ENCODE measurements at regions of chr4 and their contacts with region 1.

Region 1: DNA sequence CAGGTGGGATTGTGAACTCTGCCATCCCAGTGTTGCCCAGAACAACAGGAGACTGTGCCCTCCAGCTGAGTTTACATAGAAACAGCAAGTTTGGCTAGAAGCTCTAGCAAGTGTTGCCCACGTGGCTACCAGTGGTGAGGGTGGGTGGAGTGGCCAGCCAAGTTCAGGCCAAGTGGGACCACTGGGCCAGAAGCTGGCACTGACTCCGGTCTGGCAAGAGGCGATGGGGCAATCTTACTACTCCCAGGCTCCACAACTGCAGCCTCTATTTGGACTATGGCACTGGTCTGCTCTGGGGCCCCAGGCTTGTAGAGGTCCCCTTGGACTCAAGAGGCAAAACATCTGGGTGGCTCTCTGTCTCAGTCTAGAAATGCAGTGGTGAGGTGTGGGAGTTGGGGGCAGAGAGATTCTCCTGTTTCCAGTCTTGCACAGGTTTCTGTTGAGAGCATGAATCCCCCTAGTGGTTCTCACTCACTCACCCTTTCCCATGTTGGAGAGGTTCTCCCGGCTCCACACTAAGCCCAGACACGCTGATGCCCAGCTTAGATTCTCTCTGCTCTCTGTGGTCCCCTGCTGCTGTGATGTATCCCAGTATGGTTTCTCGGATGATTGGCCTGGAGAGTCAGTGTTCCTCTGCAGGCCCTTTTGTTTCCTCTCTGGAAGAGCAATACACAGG is 615.3 kb downstream of the PDHA2 start:
- DNase-seq: no peak
- H3K4me3 ChIP-seq: no peak overlapping the region
- H3K27ac ChIP-seq: no peak overlapping the region
- H3K4me1 ChIP-seq: no peaks in the 10 kb centered on the region
- H3K27me3 ChIP-seq: no peaks in the 10 kb centered on the region
- CTCF ChIP-seq: no peak
- POLR2A ChIP-seq: no peak

Region 2: DNA sequence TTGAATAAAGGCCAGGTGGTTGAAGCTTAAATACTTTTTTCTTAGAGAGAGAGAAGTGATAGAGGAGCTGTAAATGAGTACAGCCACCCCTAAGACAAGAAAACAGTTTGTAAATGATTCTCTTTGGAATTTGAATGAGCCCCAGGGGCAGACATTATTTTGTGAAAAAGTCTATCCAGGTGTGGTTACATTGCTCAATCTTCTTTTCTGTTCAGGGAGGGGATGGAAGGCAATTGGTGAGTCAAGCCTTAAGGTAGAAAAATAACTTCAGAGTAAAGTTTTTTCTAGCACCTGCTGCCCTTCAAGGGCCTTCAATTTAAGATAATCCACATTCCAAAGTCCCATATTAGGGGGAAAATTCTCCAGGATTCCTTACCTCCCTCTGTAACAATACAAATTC is 31.4 kb after region 1 on chr4:
- intact Hi-C with region 1: loop called (anchors 1 kb)
- DNase-seq: no peak
- H3K4me3 ChIP-seq: no peak overlapping the region
- H3K27ac ChIP-seq: no peak overlapping the region
- H3K4me1 ChIP-seq: no peaks in the 10 kb centered on the region
- H3K27me3 ChIP-seq: no peaks in the 10 kb centered on the region
- CTCF ChIP-seq: no peak
- POLR2A ChIP-seq: no peak